ENCODE measurements at regions of chr4 and their contacts with region 1.

Region 1: GRCh38 chr4:158253350-158253980 is 43.2 kb downstream of the TMEM144 start:
- DNase-seq: peak in 3 of 5 donors; percentile 36 to 82 (median 74)
- H3K4me3 ChIP-seq: no peak overlapping the region
- H3K27ac ChIP-seq: no peak overlapping the region
- H3K4me1 ChIP-seq: no peaks in the 10 kb centered on the region
- H3K27me3 ChIP-seq: no peaks in the 10 kb centered on the region
- CTCF ChIP-seq: peak; percentile 64

Region 2: DNA sequence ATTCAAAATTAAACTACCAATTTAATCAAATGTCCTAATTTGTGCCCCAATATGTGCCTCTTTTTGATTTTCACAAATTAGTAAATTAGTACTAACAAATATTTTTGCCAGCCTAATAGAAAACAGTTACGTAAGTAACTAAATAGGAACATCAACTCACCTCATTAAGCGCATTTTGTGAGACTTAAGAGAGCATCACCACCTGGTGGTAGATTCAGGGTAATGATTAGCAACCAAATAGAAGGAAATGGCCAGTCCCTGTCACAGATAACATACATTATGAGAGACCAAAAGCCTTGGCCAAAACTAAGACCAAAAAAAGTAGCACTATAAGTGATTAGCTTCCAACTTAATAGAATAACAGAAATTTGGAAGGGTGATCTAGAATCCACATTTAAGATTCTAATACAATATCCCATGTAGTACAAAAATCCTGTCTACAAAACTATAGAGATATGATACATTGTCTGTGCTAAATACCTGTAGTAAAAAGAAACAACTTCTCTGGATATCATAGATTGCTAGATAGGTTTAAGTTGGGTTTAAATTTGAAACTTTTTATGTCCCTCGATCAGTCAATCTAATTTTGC is 371.5 kb after region 1 on chr4:
- intact Hi-C with region 1: loop called (anchors 10 kb)
- DNase-seq: peak in 2 of 5 donors; percentile 55 to 78
- H3K4me3 ChIP-seq: no peak overlapping the region
- H3K27ac ChIP-seq: no peak overlapping the region
- H3K4me1 ChIP-seq: no peaks in the 10 kb centered on the region
- H3K27me3 ChIP-seq: no peaks in the 10 kb centered on the region
- CTCF ChIP-seq: peak; percentile 65

Measured in kidney (tissue), 22 donors.